ENCODE measurements at regions of chr5 and their contacts with region 1.

Region 1: DNA sequence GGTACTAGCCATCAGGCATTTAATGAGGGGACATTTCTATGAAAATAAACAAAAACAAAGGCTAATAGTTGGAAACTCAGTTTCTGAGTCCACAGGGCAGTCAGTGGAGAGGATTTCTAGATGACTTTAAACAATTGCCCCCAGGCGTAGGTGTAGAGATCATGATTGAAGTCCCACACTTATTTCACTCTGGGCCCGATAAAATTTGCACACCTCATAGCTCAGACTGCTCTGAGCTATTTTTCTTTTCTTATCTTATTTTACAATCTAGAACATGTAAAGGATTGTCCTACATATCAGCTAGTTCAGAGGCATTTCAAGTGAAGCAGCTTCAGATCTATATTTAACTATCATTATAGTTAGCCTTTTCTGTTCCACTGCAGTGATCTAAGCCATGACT is 22.3 kb downstream of the PRDM9 start:
- DNase-seq: no peak
- H3K4me3 Mint-ChIP-seq: no peak overlapping the region
- H3K27ac Mint-ChIP-seq: no peak overlapping the region
- H3K4me1 Mint-ChIP-seq: no peaks in the 10 kb centered on the region
- H3K27me3 Mint-ChIP-seq: no peaks in the 10 kb centered on the region

Region 2: GRCh38 chr5:23253621-23254198 is 276.0 kb before region 1 on chr5:
- intact Hi-C with region 1: no loop called
- DNase-seq: no peak
- H3K4me3 Mint-ChIP-seq: no peak overlapping the region
- H3K27ac Mint-ChIP-seq: no peak overlapping the region
- H3K4me1 Mint-ChIP-seq: no peaks in the 10 kb centered on the region
- H3K27me3 Mint-ChIP-seq: no peaks in the 10 kb centered on the region

Region 3: DNA sequence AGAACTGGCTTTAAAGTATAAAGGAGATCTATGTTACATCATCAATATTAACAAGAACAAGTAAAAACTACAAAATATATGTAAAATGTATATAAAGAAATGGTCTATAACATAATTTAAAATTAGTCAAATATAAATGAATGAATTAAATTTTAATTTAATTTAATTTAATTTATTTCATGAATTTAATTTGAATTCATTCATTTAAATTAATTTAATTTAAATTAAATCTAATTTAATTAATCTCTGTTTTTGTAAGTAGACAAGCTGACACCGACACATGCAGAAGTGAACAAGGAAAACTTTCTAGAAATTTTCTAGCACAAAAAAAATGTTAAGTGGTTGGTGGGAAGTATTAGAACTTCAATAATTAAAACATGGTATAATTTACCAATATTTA is 33.2 kb before region 1 on chr5:
- intact Hi-C with region 1: loop called (anchors 5 kb)
- DNase-seq: no peak
- H3K4me3 Mint-ChIP-seq: no peak overlapping the region
- H3K27ac Mint-ChIP-seq: no peak overlapping the region
- H3K4me1 Mint-ChIP-seq: no peaks in the 10 kb centered on the region
- H3K27me3 Mint-ChIP-seq: no peaks in the 10 kb centered on the region

Measured in activated T-helper 1 cell treated with anti-CD3 and anti-CD28 coated beads, Interleukin-12 subunit alpha, Interleukin-12 subunit beta, Interleukin-2, Interleukin-4 antibody, amounts not matched to agents 30 ng/mL and 10 ng/mL and 1 ng/mL, durations not matched to agents 14 hours and 24 hours and 36 hours (primary cell).